ENCODE measurements at regions of chr15 and their contacts with region 1.

Region 1: GRCh38 chr15:61834076-61834697 is 226.1 kb downstream of the VPS13C start:
- DNase-seq: peak; percentile 65
- ATAC-seq: peak; percentile 82
- H3K4me3 ChIP-seq: no peak overlapping the region
- H3K27ac ChIP-seq: no peak overlapping the region
- H3K4me1 ChIP-seq: peaks cover 7% of the 10 kb centered on the region; the same call in 1 of the 2 replicates
- H3K27me3 ChIP-seq: no peaks in the 10 kb centered on the region; the same call in 1 of the 2 replicates
- CTCF ChIP-seq: peak; percentile 94

Region 2: GRCh38 chr15:61195116-61196002 is 638.8 kb before region 1 on chr15:
- CTCF ChIA-PET with region 1: interaction called, 18 read pairs
- POLR2A ChIA-PET with region 1: no interaction called
- in situ Hi-C with region 1: no loop called
- intact Hi-C with region 1: no loop called
- DNase-seq: peak; percentile 39
- ATAC-seq: peak; percentile 88
- H3K4me3 ChIP-seq: no peak overlapping the region
- H3K27ac ChIP-seq: no peak overlapping the region
- H3K4me1 ChIP-seq: no peaks in the 10 kb centered on the region
- H3K27me3 ChIP-seq: peaks cover 7% of the 10 kb centered on the region; the same call in 1 of the 2 replicates
- CTCF ChIP-seq: peak; percentile 83

Region 3: GRCh38 chr15:61364871-61365270 is 469.3 kb before region 1 on chr15:
- CTCF ChIA-PET with region 1: no interaction called
- POLR2A ChIA-PET with region 1: no interaction called
- in situ Hi-C with region 1: no loop called
- intact Hi-C with region 1: no loop called
- DNase-seq: no peak
- ATAC-seq: no peak
- H3K4me3 ChIP-seq: no peak overlapping the region
- H3K27ac ChIP-seq: no peak overlapping the region
- H3K4me1 ChIP-seq: no peaks in the 10 kb centered on the region
- H3K27me3 ChIP-seq: no peaks in the 10 kb centered on the region
- CTCF ChIP-seq: no peak

Region 4: DNA sequence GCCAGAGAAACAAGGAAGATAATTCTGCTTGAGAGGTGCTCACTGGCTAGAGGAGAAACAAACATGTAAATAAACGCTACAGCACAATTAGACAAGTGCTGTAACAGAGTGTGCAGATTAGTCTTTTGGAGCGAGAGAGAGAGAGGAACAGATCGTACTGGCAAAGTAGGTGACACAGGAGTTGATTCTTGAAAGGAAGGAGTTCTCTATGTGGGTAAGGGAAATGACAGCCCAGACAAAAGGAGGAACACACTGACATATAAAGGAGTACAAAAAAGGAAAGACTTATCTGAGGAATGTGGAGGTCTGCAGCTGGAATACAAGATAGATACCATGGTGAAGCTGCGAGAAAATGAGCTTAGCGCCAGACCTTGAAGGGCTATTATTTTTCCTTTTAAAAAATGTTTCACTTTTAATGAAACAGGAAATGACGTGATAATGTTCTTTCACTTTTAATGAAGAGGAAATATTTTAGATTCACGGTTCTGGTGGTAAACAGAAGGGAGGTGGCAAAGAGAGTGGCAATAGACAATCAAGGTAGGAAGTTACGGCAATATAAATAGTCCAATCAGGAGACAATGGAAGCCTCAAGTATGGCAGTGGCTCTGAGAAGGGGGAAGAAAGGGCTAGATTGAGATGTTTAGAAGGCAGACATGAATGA is 23.1 kb after region 1 on chr15:
- CTCF ChIA-PET with region 1: no interaction called
- POLR2A ChIA-PET with region 1: no interaction called
- in situ Hi-C with region 1: no loop called
- intact Hi-C with region 1: no loop called
- DNase-seq: no peak
- ATAC-seq: no peak
- H3K4me3 ChIP-seq: no peak overlapping the region
- H3K27ac ChIP-seq: no peak overlapping the region
- H3K4me1 ChIP-seq: no peaks in the 10 kb centered on the region
- H3K27me3 ChIP-seq: no peaks in the 10 kb centered on the region
- CTCF ChIP-seq: no peak

Region 5: DNA sequence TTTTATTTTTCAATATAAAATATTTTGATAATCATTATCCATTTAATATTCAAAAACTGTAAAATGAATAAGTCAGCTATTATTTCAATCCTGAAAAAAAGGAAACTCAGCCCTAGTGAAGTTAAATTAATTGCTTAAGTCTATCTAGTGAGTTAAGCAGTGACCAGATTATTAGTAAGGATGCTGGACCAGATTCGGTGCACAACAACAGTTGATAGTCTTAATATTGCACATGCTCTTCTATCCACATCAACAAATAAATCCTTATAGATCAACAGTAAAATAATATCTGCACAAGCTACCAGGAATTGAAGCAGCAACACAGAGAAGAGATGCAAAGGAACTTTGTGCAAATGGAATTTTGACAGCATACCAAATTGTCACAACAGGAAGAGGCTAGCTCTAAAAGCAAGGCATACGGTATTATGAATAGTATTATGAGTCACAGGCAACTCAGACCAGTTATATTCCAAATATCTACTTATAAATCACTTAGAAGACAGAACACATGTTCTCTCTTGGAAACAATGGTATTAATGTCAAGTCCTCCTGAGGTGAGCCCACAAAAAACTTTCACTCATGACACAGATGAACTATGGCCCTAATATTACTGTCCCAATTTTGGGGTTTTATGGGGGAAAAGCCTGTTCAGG is 201.2 kb after region 1 on chr15:
- CTCF ChIA-PET with region 1: no interaction called
- POLR2A ChIA-PET with region 1: no interaction called
- in situ Hi-C with region 1: no loop called
- intact Hi-C with region 1: no loop called
- DNase-seq: no peak
- ATAC-seq: peak; percentile 70; the same call in 1 of the 2 replicates
- H3K4me3 ChIP-seq: no peak overlapping the region
- H3K27ac ChIP-seq: no peak overlapping the region
- H3K4me1 ChIP-seq: 0 out of 2 replicates have a peak, but pooled peaks cover 7% of the 10 kb centered on the region
- H3K27me3 ChIP-seq: no peaks in the 10 kb centered on the region
- CTCF ChIP-seq: no peak

Region 6: GRCh38 chr15:62624547-62625378 is 790.6 kb after region 1 on chr15:
- CTCF ChIA-PET with region 1: interaction called, 13 read pairs
- POLR2A ChIA-PET with region 1: no interaction called
- in situ Hi-C with region 1: no loop called
- intact Hi-C with region 1: no loop called
- DNase-seq: no peak
- ATAC-seq: no peak
- H3K4me3 ChIP-seq: no peak overlapping the region
- H3K27ac ChIP-seq: no peak overlapping the region
- H3K4me1 ChIP-seq: no peaks in the 10 kb centered on the region
- H3K27me3 ChIP-seq: no peaks in the 10 kb centered on the region
- CTCF ChIP-seq: no peak

Region 7: DNA sequence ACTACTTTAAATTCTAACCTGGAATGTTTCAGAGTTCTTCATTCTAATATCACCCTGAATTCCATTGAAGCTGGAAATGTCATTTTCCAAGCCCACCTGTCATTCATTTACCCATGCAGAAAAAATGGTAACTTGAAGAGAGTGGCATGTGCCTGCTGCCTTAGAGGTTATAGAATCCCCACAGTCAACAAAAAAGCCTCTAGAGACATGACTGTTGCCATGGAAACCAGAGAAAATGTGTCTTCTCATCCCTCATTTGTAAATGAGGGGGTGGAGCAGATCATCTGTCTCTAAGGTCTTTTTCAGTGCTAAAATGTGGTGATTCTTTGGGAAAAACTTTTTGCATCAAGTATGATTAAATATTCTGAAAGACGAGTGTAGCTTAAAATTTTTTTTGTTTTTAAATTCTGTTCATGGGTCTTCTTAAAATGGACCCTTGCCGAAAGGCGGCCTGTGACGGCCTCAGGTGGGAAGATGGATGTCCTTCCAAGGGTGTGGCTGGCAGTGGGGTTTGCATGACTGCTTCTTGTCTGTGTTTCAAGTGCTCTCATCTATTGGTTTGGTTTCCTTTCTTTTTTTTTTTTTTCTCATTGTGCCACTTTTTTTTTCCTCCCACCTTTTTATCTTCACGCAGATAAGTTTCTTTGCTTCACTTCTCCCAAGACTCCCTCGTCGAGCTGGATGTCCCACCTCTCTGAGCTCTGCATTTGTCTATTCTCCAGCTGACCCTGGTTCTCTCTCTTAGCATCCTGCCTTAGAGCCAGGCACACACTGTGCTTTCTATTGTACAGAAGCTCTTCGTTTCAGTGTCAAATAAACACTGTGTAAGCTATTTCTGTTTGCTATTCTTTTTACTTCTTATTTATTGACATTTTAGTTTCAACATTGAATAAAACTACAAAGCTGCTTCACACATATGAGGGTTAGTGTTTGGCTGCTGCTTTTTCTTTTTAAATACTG is 1231.4 kb after region 1 on chr15:
- CTCF ChIA-PET with region 1: no interaction called
- POLR2A ChIA-PET with region 1: no interaction called
- in situ Hi-C with region 1: no loop called
- intact Hi-C with region 1: no loop called
- DNase-seq: no peak
- ATAC-seq: no peak
- H3K4me3 ChIP-seq: no peak overlapping the region
- H3K27ac ChIP-seq: no peak overlapping the region
- H3K4me1 ChIP-seq: no peaks in the 10 kb centered on the region
- H3K27me3 ChIP-seq: no peaks in the 10 kb centered on the region
- CTCF ChIP-seq: no peak

Measured in Panc1 (cell line).